ENCODE measurements at regions of chr18 and their contacts with region 1.

Region 1: DNA sequence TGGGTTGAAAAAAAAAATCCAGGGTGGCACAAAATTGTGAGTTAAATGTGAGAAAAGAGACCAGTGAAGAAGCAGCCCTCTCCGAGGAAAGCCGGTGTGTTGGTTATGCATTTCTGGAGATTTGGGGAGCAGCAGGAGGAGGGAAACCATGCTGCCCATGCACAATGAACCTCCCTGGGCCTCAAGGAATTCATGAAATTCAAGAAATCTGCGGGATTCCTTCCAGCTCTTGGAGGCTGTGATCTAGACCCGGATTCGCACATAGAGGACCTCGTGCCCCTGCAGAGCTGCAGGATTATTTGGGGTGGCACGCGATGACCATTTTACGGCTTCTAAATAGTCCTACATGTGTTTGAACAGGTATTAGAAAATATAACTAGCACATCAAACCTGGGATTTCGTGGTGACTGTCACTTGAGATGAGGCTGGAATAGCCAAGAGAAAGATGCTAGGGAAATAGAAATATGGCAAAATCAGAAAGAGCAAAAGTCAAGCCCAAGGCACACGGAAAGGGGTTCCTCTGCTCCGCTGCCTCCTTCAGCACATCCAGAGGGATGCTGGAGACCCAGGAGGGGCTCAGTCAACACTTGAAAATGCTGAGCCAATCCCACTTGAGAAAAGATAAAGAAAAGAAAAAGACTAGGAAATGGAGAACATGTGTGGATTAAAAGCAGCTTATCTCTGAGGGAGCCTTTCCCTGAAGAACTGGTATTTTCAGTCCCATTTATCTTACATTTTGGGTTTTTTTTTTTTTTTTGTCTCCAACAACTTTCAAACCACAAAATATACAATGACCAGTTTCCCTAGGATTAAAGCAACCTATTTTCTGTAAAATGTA is 22.0 kb downstream of the KCTD1 start:
- DNase-seq: no peak
- ATAC-seq: no peak
- H3K4me3 ChIP-seq: no peak overlapping the region
- H3K27ac ChIP-seq: no peak overlapping the region
- H3K4me1 ChIP-seq: no peaks in the 10 kb centered on the region
- H3K27me3 ChIP-seq: no peaks in the 10 kb centered on the region
- CTCF ChIP-seq: no peak
- POLR2A ChIP-seq: no peak

Region 2: DNA sequence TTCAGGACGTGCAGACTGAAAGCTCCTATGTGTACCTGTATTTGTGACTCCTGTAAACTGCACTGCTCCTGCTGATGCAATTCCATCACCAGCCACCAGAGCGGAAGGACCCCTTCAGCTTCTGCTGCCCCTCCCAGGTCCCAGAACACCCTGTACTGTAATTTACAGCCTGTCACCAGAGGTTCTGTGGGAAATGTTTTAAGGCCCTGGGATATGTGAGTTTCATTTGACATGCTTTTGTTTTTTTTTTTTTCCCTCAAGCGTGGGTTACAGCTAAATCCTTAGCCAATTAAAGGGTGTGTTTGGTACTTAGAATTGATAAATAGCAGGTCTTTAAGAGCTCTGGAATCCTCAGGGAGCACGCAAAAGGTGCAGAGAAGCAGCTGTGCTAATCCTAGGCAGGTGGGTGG is 57.4 kb before region 1 on chr18:
- in situ Hi-C with region 1: no loop called
- intact Hi-C with region 1: no loop called
- DNase-seq: no peak
- ATAC-seq: no peak
- H3K4me3 ChIP-seq: no peak overlapping the region
- H3K27ac ChIP-seq: no peak overlapping the region
- H3K4me1 ChIP-seq: peaks cover 7 to 16% of the 10 kb centered on the region in 2 donors
- H3K27me3 ChIP-seq: no peaks in the 10 kb centered on the region
- CTCF ChIP-seq: peak in 3 of 5 experiments; percentile 19 to 44 (median 20)
- POLR2A ChIP-seq: no peak

Region 3: DNA sequence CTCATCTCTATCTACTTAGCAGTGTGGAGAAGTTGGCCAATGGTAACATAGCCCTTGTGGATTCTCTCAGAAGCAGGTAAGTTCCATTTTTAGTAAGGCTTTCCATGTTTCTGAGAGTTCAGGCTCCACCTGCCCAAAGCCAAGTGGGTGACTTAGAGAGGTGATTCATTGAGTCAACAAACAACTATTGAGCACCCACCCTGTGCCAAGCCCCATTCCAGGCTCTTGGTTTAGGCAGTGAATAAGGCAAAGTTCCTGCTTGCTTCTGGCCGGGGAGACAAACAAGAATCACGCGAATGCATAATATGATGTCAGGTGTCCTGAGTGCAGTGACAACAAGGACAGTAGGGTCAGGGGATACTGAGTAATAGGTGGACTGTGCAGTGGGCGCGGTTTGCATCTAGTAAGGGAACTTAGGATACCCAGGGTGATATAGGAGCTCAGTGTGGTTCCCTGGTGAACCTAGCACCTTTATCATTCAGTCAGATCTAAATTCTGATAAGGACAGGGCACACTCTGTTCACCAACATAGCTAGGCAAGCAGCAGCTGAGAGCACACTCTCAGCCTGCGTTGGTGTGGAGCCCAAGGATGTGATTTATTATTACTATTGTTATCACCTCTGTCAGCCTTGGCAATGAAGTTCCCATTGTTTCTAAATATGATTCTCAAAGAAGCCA is 53.7 kb after region 1 on chr18:
- in situ Hi-C with region 1: no loop called
- intact Hi-C with region 1: loop called (anchors 10 kb)
- DNase-seq: no peak
- ATAC-seq: no peak
- H3K4me3 ChIP-seq: no peak overlapping the region
- H3K27ac ChIP-seq: no peak overlapping the region
- H3K4me1 ChIP-seq: no peaks in the 10 kb centered on the region
- H3K27me3 ChIP-seq: peaks cover 0 to 12% (median 0%) of the 10 kb centered on the region in 3 donors
- CTCF ChIP-seq: no peak
- POLR2A ChIP-seq: no peak